Ascending aorta (tissue), 2 donors: ENCODE measurements at regions of chr20 and their contacts with region 1.

Region 1: GRCh38 chr20:46174469-46175128 is 56.5 kb downstream of the CD40 start:
- DNase-seq: peak in 1 of 2 donors; percentile 77
- H3K4me3 ChIP-seq: peak overlapping the region in 1 of 2 donors; percentile 10
- H3K27ac ChIP-seq: no peak overlapping the region
- H3K4me1 ChIP-seq: no peaks in the 10 kb centered on the region
- H3K27me3 ChIP-seq: peaks cover 21% of the 10 kb centered on the region
- CTCF ChIP-seq: peak; percentile 47 to 58 (median 51)

Region 2: DNA sequence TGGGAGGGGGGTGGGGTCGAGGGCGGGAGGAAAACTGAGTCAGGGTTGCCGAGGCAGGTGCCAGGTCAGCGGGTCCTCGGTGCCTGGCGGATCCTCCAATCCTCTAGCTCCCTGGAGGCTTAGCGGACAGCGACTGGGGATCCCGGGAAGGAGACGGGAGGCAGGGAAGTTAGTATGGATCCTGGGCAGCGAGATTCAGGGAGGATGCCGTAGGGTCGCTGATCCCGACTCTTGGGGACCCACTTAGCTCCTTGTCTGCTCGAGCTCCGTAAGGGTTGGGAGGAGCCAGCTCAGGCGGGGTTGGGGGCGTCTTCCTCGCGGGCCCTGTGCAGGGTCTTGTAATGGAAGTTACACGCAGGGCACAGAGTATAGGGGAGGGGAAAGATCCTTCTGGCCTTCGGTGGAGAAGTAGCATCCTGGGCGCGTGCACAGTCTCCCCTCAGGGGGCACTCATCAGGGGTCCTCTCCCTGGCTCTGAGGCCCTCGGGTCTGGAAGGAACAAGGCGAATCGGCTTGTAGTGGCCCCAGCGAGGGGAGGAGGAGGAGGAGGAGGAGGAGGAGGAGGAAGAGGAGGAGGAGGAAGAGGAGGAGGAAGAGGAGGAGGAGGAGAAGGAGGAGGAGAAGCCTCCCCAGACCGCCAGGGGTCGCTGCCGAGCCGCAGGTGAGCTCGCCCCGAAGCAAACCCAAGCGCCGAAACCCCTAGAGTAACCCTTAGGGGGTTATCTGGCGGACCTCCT is 152.0 kb before region 1 on chr20:
- intact Hi-C with region 1: loop called (anchors 5 kb)
- DNase-seq: no peak
- H3K4me3 ChIP-seq: peak overlapping the region; percentile 18 to 49
- H3K27ac ChIP-seq: no peak overlapping the region
- H3K4me1 ChIP-seq: peaks cover 4 to 6% of the 10 kb centered on the region in 2 donors
- H3K27me3 ChIP-seq: peaks cover 12% of the 10 kb centered on the region
- CTCF ChIP-seq: peak; percentile 62 to 69 (median 67)

Region 3: DNA sequence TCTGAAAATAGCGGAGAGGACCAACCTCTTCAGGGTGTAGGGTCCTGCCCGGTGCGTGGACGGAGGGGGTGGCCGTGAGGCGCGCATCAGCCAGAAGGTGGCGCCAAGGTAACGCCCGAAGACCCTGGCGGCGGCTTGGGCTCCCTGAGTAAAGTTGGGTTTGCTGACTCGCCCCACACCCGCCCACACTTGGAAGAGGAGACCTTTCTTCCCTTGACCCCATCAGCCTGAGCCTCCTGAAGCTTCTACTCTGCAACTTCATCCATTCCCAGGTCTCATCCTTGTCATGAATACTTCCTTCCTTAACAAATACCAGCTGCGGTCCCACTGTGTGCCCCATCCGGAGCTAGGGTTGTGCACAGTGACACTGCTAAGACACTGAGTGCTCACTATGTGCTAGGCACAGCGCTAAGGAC is 41.9 kb before region 1 on chr20:
- intact Hi-C with region 1: loop called (anchors 2 kb)
- DNase-seq: peak in 1 of 2 donors; percentile 77
- H3K4me3 ChIP-seq: no peak overlapping the region
- H3K27ac ChIP-seq: no peak overlapping the region
- H3K4me1 ChIP-seq: peaks cover 0 to 14% of the 10 kb centered on the region in 2 donors
- H3K27me3 ChIP-seq: no peaks in the 10 kb centered on the region
- CTCF ChIP-seq: peak; percentile 70 to 72 (median 72)